IMR-90 (cell line): ENCODE measurements at regions of chr20 and their contacts with region 1.

Region 1: GRCh38 chr20:13736436-13737191 is 48.1 kb downstream of the ESF1 start:
- DNase-seq: peak; percentile 81
- ATAC-seq: peak; percentile 79
- H3K4me3 ChIP-seq: no peak overlapping the region
- H3K27ac ChIP-seq: peak overlapping the region; percentile 45; the same call in 1 of the 2 replicates
- H3K4me1 ChIP-seq: peaks cover 3% of the 10 kb centered on the region; the same call in 1 of the 2 replicates
- H3K27me3 ChIP-seq: no peaks in the 10 kb centered on the region
- CTCF ChIP-seq: no peak
- POLR2A ChIP-seq: no peak
- RAD21 ChIP-seq: no peak

Region 2: GRCh38 chr20:13355941-13356486 is 380.6 kb before region 1 on chr20:
- CTCF ChIA-PET with region 1: no interaction called
- POLR2A ChIA-PET with region 1: no interaction called
- dilution Hi-C with region 1: no loop called
- in situ Hi-C with region 1: no loop called
- intact Hi-C with region 1: no loop called
- DNase-seq: no peak
- ATAC-seq: no peak
- H3K4me3 ChIP-seq: no peak overlapping the region
- H3K27ac ChIP-seq: no peak overlapping the region
- H3K4me1 ChIP-seq: no peaks in the 10 kb centered on the region; the same call in 1 of the 2 replicates
- H3K27me3 ChIP-seq: no peaks in the 10 kb centered on the region; the same call in 1 of the 2 replicates
- CTCF ChIP-seq: no peak
- POLR2A ChIP-seq: no peak
- RAD21 ChIP-seq: no peak

Region 3: DNA sequence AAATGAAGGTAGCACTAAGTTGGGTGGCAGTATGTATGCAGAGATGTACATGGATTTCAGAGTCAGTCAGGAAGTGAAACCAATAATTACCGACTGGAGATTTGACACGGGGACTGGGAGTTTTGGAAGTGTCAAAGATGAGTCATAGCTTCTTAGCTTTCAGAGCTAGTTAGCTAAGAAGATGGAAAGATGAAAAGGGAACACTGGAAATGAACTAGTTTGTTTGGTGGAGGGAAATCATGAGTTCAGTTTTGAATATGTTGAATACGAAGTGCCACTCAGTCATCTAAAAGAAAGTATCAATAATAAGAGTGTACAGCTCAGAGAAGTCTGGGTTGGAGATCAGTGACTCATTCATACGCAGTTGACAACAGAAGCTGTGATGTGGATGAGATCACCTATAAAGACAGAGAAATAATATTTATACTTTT is 40.6 kb after region 1 on chr20:
- CTCF ChIA-PET with region 1: no interaction called
- POLR2A ChIA-PET with region 1: no interaction called
- dilution Hi-C with region 1: no loop called
- in situ Hi-C with region 1: no loop called
- intact Hi-C with region 1: loop called (anchors 2 kb)
- DNase-seq: peak; percentile 59
- ATAC-seq: peak; percentile 42; the same call in 1 of the 2 replicates
- H3K4me3 ChIP-seq: no peak overlapping the region
- H3K27ac ChIP-seq: no peak overlapping the region
- H3K4me1 ChIP-seq: no peaks in the 10 kb centered on the region
- H3K27me3 ChIP-seq: no peaks in the 10 kb centered on the region
- CTCF ChIP-seq: no peak
- POLR2A ChIP-seq: no peak
- RAD21 ChIP-seq: no peak

Region 4: GRCh38 chr20:13900497-13900896 is 163.9 kb after region 1 on chr20:
- CTCF ChIA-PET with region 1: no interaction called
- POLR2A ChIA-PET with region 1: no interaction called
- dilution Hi-C with region 1: no loop called
- in situ Hi-C with region 1: no loop called
- intact Hi-C with region 1: no loop called
- DNase-seq: no peak
- ATAC-seq: no peak
- H3K4me3 ChIP-seq: no peak overlapping the region
- H3K27ac ChIP-seq: no peak overlapping the region
- H3K4me1 ChIP-seq: no peaks in the 10 kb centered on the region
- H3K27me3 ChIP-seq: no peaks in the 10 kb centered on the region
- CTCF ChIP-seq: no peak
- POLR2A ChIP-seq: no peak
- RAD21 ChIP-seq: no peak